ENCODE measurements at regions of chr4 and their contacts with region 1.

Region 1: GRCh38 chr4:71229477-71230270 is 109.1 kb upstream of the SLC4A4 start:
- DNase-seq: peak; percentile 81
- ATAC-seq: peak; percentile 56
- H3K4me3 ChIP-seq: no peak overlapping the region
- H3K27ac ChIP-seq: peak overlapping the region; percentile 57
- H3K4me1 ChIP-seq: peaks cover 19% of the 10 kb centered on the region
- H3K27me3 ChIP-seq: no peaks in the 10 kb centered on the region
- CTCF ChIP-seq: peak; percentile 75
- POLR2A ChIP-seq: no peak
- RAD21 ChIP-seq: peak; percentile 83

Region 2: GRCh38 chr4:71195924-71196323 is 33.8 kb before region 1 on chr4:
- CTCF ChIA-PET with region 1: interaction called, 10 read pairs
- POLR2A ChIA-PET with region 1: no interaction called
- dilution Hi-C with region 1: no loop called
- in situ Hi-C with region 1: no loop called
- intact Hi-C with region 1: no loop called
- DNase-seq: peak; percentile 87
- ATAC-seq: peak; percentile 94
- H3K4me3 ChIP-seq: no peak overlapping the region
- H3K27ac ChIP-seq: peak overlapping the region; percentile 55; the same call in 1 of the 2 replicates
- H3K4me1 ChIP-seq: peaks cover 10% of the 10 kb centered on the region
- H3K27me3 ChIP-seq: no peaks in the 10 kb centered on the region
- CTCF ChIP-seq: no peak
- POLR2A ChIP-seq: no peak
- RAD21 ChIP-seq: no peak

Region 3: DNA sequence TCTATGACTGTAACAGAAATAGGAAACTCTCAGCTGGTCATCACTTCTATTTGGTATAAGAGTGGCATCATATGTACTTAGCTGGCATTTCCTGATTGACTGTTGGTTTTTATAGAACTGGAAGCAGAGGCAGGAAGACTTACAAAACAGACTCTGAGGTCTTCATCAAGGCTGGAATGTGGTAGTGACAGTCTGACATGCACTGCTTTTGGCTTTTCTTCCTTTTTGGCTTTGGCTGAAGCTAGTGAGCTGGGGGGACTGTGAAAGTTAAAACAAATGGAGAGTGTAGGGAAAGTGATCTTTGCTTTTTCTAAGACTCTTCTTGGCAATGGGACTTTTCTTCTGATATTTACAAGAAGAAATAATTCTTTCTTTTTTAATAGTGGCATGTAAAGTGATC is 12.0 kb before region 1 on chr4:
- CTCF ChIA-PET with region 1: interaction called, 11 read pairs
- POLR2A ChIA-PET with region 1: no interaction called
- dilution Hi-C with region 1: no loop called
- in situ Hi-C with region 1: no loop called
- intact Hi-C with region 1: no loop called
- DNase-seq: no peak
- ATAC-seq: peak; percentile 49; the same call in 1 of the 2 replicates
- H3K4me3 ChIP-seq: no peak overlapping the region
- H3K27ac ChIP-seq: no peak overlapping the region
- H3K4me1 ChIP-seq: peaks cover 4% of the 10 kb centered on the region
- H3K27me3 ChIP-seq: no peaks in the 10 kb centered on the region
- CTCF ChIP-seq: no peak
- POLR2A ChIP-seq: no peak
- RAD21 ChIP-seq: no peak

Region 4: GRCh38 chr4:71307729-71308128 is 78.1 kb after region 1 on chr4:
- CTCF ChIA-PET with region 1: no interaction called
- POLR2A ChIA-PET with region 1: no interaction called
- dilution Hi-C with region 1: no loop called
- in situ Hi-C with region 1: no loop called
- intact Hi-C with region 1: no loop called
- DNase-seq: no peak
- ATAC-seq: no peak
- H3K4me3 ChIP-seq: no peak overlapping the region
- H3K27ac ChIP-seq: no peak overlapping the region
- H3K4me1 ChIP-seq: peaks cover 5% of the 10 kb centered on the region
- H3K27me3 ChIP-seq: no peaks in the 10 kb centered on the region
- CTCF ChIP-seq: no peak
- POLR2A ChIP-seq: no peak
- RAD21 ChIP-seq: no peak

Region 5: DNA sequence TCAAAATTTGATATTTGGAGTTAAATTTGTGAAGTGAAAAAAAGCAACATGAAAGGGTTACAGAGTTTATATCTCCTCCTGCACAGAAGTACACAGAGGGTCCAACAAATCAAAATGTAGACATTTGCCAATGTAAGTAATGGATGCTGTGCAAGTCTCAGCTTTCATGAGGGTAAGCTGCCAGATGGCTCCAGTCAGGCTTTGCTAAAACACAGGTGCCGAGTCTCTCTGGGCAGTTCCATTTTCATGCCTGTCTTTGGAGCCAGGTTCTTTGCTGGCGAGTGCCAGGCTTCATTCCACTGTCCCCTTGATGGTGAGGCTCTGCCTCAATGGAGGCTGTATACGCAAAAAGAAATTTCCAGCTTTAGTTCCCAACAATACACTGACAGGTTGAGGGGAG is 137.1 kb after region 1 on chr4:
- CTCF ChIA-PET with region 1: interaction called, 10 read pairs
- POLR2A ChIA-PET with region 1: no interaction called
- dilution Hi-C with region 1: no loop called
- in situ Hi-C with region 1: no loop called
- intact Hi-C with region 1: no loop called
- DNase-seq: no peak
- ATAC-seq: no peak
- H3K4me3 ChIP-seq: no peak overlapping the region
- H3K27ac ChIP-seq: no peak overlapping the region
- H3K4me1 ChIP-seq: no peaks in the 10 kb centered on the region
- H3K27me3 ChIP-seq: no peaks in the 10 kb centered on the region
- CTCF ChIP-seq: no peak
- POLR2A ChIP-seq: no peak
- RAD21 ChIP-seq: no peak

Region 6: DNA sequence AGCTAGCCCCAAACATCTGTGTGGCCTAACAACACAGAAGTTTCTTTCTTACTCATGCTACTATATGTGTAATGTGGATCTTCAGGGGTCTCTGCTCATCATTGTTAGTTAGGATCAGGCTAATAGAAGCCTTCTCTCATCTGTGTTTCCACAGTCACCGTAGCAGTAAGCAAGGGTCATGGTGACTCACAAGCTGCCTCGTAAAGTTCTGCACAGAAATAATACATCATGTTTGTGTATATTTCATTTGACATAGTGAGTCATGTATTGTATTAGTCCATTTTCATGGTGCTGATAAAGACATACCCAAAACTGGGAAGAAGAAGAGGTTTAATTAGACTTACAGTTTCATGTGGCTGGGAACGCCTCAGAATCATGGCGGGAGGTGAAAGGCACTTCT is 147.9 kb after region 1 on chr4:
- CTCF ChIA-PET with region 1: no interaction called
- POLR2A ChIA-PET with region 1: no interaction called
- dilution Hi-C with region 1: no loop called
- in situ Hi-C with region 1: no loop called
- intact Hi-C with region 1: loop called (anchors 5 kb)
- DNase-seq: peak; percentile 95
- ATAC-seq: peak; percentile 89
- H3K4me3 ChIP-seq: no peak overlapping the region
- H3K27ac ChIP-seq: no peak overlapping the region
- H3K4me1 ChIP-seq: peaks cover 6% of the 10 kb centered on the region; the same call in 1 of the 2 replicates
- H3K27me3 ChIP-seq: no peaks in the 10 kb centered on the region
- CTCF ChIP-seq: no peak
- POLR2A ChIP-seq: no peak
- RAD21 ChIP-seq: no peak